ENCODE measurements at regions of chr13 and their contacts with region 1.

Region 1: GRCh38 chr13:27826379-27827353 is 34.4 kb downstream of the GSX1 start:
- DNase-seq: peak; percentile 82 to 92
- ATAC-seq: peak; percentile 91
- H3K4me3 ChIP-seq: no peak overlapping the region
- H3K27ac ChIP-seq: no peak overlapping the region
- H3K4me1 ChIP-seq: no peaks in the 10 kb centered on the region
- H3K27me3 ChIP-seq: no peaks in the 10 kb centered on the region

Region 2: DNA sequence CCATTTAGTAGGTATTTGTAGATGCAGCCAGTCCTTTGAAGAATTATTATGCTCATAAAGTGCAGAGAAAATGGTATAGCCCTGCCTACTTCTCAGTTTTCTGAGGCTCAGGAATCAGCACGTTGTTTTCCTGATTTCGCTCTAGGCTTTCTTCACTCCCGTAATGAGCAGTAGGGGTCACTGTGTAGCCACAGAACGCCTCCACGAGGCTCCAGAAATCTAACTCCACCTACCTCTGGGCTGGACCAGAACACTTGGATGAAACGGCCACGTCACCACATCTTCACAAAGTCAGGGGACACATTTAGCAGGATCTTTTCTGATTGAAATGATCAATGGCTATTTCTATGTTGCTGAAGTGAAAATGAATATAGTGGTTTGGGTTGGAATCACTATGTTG is 452.0 kb before region 1 on chr13:
- intact Hi-C with region 1: loop called in 1 of 2 experiments (anchors 2 kb)
- DNase-seq: peak; percentile 73 to 77
- ATAC-seq: peak; percentile 91
- H3K4me3 ChIP-seq: no peak overlapping the region
- H3K27ac ChIP-seq: no peak overlapping the region
- H3K4me1 ChIP-seq: no peaks in the 10 kb centered on the region
- H3K27me3 ChIP-seq: no peaks in the 10 kb centered on the region

Region 3: DNA sequence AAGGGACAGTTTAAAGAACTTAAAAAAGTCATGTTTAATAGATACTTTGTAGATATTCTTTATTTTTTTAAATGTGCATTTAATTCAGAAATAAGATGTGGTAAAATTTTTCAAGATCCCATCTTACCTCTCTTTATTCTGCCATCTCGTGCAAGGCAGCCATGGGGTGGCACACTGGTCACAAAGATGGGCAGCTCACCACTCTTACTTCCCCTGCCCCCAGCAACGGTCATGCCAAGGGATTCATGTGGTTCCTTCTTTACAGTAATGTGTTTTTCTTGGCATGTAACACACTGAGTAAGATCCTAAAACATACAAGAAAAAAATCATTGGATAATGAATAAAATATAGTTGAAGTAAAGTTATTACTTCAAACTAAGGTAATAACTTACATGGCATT is 270.6 kb before region 1 on chr13:
- intact Hi-C with region 1: loop called (anchors 2 to 5 kb)
- DNase-seq: peak in 1 of 2 donors; percentile 73
- ATAC-seq: no peak
- H3K4me3 ChIP-seq: no peak overlapping the region
- H3K27ac ChIP-seq: no peak overlapping the region
- H3K4me1 ChIP-seq: no peaks in the 10 kb centered on the region
- H3K27me3 ChIP-seq: no peaks in the 10 kb centered on the region

Region 4: GRCh38 chr13:27980280-27980998 is 153.8 kb after region 1 on chr13:
- intact Hi-C with region 1: loop called in 1 of 2 experiments (anchors 5 kb)
- DNase-seq: no peak
- ATAC-seq: no peak
- H3K4me3 ChIP-seq: no peak overlapping the region
- H3K27ac ChIP-seq: no peak overlapping the region
- H3K4me1 ChIP-seq: no peaks in the 10 kb centered on the region
- H3K27me3 ChIP-seq: no peaks in the 10 kb centered on the region

Measured in aorta (tissue), 5 donors.